WTC11 (cell line): ENCODE measurements at regions of chr17 and their contacts with region 1.

Region 1: DNA sequence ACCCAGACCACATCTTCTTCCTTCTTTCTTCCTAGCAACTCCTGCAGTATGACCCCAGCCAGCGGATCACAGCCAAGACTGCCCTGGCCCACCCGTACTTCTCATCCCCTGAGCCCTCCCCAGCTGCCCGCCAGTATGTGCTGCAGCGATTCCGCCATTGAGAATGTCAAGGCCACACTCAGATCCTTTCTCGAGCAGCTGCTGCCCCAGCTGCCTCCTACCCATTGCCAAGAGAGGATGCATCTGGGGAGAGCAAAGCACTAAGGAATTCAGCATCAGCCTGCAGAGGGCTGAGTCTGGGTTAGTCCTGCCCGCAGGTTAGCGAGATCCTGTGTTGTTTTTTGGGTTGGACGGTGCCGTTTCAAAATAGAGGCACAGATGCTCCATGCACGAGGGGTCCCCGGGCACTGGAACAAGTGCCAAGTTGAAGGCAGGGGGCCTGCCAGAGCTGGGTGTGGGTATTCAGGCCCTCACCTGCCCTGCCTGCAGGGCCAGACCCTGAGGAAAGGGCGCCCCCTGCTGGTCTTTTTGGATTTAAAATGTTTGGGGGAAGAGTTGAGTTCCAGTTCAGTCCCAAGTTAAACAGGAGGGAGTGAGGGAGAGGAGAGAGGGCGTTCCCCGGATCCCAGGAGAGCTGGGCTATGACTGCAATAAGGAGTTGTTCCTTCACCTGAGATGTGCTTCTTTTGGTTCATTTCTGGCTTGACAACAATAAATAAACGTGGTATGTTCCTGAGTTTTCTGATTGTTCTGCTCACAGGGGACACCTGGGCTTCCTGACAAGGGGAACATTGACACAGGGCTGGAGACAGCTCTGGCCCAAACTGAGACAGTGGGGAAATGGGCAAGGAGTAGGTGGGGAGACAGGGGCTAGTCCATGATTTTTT is 4.9 kb downstream of the CDK3 start:
- DNase-seq: peak; percentile 93
- ATAC-seq: peak; percentile 82
- H3K4me3 Mint-ChIP-seq: no peak overlapping the region
- H3K27ac Mint-ChIP-seq: peak overlapping the region; percentile 92
- H3K4me1 Mint-ChIP-seq: no peaks in the 10 kb centered on the region
- H3K27me3 Mint-ChIP-seq: no peaks in the 10 kb centered on the region
- CTCF ChIP-seq: peak; percentile 91

Region 2: DNA sequence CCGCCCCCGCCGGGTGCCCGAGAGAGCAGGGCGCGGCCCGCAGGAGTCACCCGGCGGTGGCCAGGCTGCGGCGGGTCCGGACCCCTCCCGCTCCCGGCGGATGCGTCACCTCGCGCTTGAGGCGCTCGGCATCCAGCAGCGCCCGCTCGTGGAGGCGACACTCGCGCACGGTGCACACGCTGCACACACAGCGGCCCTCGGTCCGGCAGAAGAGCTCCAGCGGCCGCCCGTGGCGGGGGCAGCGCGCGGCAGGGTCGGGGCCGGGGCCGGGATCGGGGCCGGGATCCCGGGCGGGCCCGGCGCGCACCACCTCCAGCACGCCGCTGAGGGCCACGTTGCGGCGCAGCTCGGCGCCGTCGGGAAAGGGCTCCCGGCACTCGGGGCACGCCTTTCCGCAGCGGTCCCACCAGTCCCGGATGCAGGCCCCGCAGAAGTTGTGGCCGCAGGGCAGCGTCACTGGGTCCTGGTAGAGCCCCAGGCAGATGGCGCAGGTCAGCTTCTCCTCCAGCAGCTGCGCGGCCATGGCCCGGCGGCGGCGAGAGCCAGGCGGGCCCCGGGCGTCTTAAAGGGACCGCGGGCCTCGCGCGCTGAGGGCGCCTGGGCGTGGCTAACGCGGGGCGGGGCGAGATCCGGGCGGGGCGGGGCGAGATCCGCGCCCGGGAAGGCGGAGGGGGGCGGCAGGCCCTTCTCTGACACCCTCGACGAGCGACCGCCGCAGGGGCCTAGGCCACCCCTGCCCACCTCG is 108.9 kb before region 1 on chr17 and contains the start of gene TRIM65:
- CTCF ChIA-PET with region 1: interaction called, 11 read pairs
- POLR2A ChIA-PET with region 1: no interaction called
- DNase-seq: peak; percentile 73
- ATAC-seq: peak; percentile 60
- H3K4me3 Mint-ChIP-seq: peak within 1 kb of the TSS; percentile 82
- H3K27ac Mint-ChIP-seq: peak within 1 kb of the TSS; percentile 88
- H3K4me1 Mint-ChIP-seq: peaks cover 26% of the 10 kb centered on the region
- H3K27me3 Mint-ChIP-seq: no peaks in the 10 kb centered on the region
- CTCF ChIP-seq: no peak
- total RNA-seq, gene TRIM65: 51.3 to 56.4 TPM (median 51.4 TPM) in 3 replicates

Region 3: DNA sequence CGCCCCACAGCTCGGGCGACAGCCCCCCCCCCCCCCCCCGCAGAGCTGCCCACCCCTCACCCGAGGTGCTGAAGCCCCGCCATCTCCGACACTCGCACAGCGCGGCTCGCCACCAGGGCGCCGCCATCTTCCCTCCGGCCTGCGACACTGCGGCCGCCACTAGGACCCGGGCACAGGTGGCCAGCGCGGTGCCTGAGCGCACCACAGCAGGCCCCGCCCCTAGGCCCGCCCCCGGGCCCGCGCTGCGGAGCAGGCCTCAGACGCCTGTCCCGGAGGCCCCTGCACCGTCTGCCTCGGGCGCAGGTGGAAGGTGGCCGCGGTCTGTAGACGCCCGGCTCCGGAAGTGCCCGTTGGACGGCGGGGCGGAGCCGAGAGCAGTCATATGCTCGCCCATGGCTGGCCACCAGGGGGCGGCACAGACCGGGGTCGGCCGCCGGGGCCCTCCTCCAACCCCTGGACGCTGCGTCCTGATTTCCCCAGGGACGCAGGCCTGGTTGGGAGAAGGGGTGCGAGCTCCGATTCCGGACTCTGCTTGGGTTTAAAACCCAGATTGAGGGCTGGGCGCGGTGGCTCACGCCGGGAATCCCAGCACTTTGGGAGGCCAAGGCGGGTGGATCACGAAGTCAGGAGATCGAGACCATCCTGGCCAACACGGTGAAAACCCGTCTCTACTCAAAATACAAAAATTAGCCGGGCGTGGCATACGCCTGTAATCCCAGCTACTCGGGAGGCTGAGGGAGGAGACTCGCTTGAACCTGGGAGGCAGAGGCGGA is 100.6 kb before region 1 on chr17 and contains the start of gene MRPL38:
- CTCF ChIA-PET with region 1: interaction called, 70 read pairs
- POLR2A ChIA-PET with region 1: no interaction called
- DNase-seq: peak; percentile 96
- ATAC-seq: peak; percentile 98
- H3K4me3 Mint-ChIP-seq: peak within 1 kb of the TSS; percentile 98
- H3K27ac Mint-ChIP-seq: peak within 1 kb of the TSS; percentile 95
- H3K4me1 Mint-ChIP-seq: peaks cover 3% of the 10 kb centered on the region; the same call in 1 of the 2 replicates
- H3K27me3 Mint-ChIP-seq: no peaks in the 10 kb centered on the region
- CTCF ChIP-seq: peak; percentile 97
- total RNA-seq, gene MRPL38: 107 to 146 TPM (median 116 TPM) in 3 replicates

Region 4: DNA sequence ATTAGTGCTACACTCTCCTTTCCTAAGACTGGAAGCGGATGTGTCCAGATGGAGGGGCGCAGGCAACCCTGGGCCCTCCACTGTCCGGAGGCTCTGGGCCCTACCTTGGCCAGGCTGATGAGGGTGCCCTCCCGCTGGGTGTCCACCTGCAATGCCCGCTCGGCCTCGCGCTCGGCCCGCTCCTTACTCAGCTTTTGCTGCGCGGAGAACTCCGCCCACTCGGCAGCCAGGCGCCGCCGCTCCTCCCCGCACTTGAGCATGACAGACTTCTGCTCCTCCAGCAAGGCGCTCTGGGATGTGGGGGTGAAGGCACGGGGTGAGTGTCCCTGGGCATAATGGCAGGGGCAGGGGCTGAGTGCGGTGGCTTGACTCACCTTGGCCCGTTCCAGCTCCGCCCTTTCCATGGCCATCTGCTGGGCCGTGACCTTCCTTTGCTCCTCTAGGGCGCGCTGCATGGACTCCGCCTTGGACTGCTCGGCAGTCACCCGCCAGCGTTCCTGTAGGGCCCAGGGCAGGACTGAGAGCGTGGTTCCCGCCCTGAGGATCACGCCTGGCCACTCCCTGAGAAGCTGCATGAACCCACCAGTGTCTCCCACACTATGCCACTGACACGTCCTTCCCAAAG is 90.8 kb before region 1 on chr17:
- CTCF ChIA-PET with region 1: interaction called, 20 read pairs
- POLR2A ChIA-PET with region 1: no interaction called
- DNase-seq: peak; percentile 66
- ATAC-seq: peak; percentile 83
- H3K4me3 Mint-ChIP-seq: no peak overlapping the region
- H3K27ac Mint-ChIP-seq: peak overlapping the region; percentile 9; the same call in 1 of the 2 replicates
- H3K4me1 Mint-ChIP-seq: 0 out of 2 replicates have a peak, but pooled peaks cover 2% of the 10 kb centered on the region
- H3K27me3 Mint-ChIP-seq: no peaks in the 10 kb centered on the region
- CTCF ChIP-seq: no peak

Region 5: GRCh38 chr17:75978938-75979704 is 26.4 kb before region 1 on chr17 and contains the starts of genes ACOX1 and TEN1:
- CTCF ChIA-PET with region 1: interaction called, 28 read pairs
- POLR2A ChIA-PET with region 1: no interaction called
- DNase-seq: peak; percentile 96
- ATAC-seq: peak; percentile 91
- H3K4me3 Mint-ChIP-seq: peak within 1 kb of the TSS; percentile 97
- H3K27ac Mint-ChIP-seq: peak within 1 kb of the TSS; percentile 100
- H3K4me1 Mint-ChIP-seq: peaks cover 63% of the 10 kb centered on the region
- H3K27me3 Mint-ChIP-seq: no peaks in the 10 kb centered on the region
- CTCF ChIP-seq: no peak
- total RNA-seq, gene ACOX1: 32.4 to 40.9 TPM (median 32.5 TPM) in 3 replicates
- total RNA-seq, gene TEN1: 15.6 to 18.4 TPM (median 17.2 TPM) in 3 replicates

Region 6: DNA sequence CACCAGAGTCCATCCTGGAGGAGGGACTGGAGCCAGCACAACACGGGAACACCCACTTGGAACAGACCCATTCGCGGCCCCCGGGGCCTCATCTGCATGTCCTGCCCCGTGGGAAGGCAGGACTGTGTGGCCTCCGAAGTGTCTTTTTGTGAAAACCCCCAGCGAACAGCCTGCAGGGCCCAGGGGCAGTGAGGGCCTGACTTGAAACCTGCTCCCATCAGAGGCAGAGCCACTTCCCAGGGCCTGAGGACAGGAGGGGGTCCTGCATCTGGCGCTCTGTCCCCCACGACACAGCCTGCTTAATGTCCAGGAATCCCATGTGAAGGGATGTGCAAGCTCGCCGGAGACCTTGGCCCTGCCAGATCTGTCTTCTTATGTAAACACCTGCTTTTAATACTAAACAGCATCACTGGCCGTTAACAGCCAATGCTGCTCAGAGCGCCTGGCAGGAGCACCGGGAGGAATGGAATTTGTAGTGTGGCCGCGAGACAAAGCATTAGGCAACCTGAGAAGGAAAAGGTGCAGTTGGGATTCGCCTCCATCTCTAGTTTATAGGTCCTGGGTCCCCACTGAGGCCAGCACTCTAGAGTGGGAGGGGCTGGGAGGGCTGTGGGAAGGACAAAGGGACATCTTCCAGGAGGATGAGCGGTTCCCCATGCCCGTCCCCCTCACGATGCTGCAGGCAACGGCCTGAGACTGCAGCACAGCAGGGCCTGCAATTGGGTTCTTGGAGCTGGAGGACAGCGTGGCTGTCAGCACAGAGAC is 31.2 kb after region 1 on chr17:
- CTCF ChIA-PET with region 1: interaction called, 13 read pairs
- POLR2A ChIA-PET with region 1: no interaction called
- DNase-seq: no peak
- ATAC-seq: peak; percentile 43
- H3K4me3 Mint-ChIP-seq: no peak overlapping the region
- H3K27ac Mint-ChIP-seq: peak overlapping the region; percentile 90
- H3K4me1 Mint-ChIP-seq: peaks cover 19% of the 10 kb centered on the region
- H3K27me3 Mint-ChIP-seq: no peaks in the 10 kb centered on the region
- CTCF ChIP-seq: no peak

Region 7: DNA sequence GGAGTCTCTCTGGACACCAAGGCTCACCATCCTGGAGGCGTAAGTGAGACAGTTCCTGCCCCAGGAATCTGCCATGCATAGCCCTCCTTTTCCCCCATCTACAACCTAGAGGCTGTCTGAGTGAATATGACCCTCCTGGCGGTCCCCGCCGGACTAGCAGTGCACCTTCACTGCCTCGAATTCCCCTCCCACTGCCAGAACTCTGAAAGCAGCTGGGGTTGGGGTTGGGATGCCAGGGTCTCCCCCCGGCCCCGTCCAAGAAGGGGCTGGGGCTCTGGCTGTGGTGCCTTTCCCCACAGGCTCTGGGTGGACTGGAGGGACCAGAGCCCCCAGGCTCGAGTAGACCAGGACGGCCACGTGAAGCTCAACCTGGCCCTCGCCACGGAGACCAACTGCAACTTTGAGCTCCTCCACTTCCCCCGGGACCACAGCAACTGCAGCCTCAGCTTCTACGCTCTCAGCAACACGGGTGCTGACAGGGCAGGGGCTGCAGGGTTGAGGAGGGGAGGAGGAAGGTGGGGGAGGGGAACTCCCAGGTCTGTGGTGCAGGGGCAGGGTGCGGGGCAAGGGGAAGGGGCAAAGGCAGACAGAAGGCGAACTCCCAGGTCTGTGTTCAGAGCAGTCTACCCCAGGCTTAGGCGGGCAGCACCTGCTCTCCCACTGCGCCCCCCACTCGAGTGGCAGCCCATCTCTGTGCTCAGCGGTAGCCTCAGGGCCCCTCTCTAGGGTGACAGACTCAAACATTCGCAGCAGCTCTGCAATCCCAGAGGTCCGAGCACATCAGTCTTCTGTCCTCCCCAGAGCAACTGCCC is 74.7 kb after region 1 on chr17:
- CTCF ChIA-PET with region 1: interaction called, 14 read pairs
- POLR2A ChIA-PET with region 1: no interaction called
- DNase-seq: peak; percentile 49
- ATAC-seq: peak; percentile 31
- H3K4me3 Mint-ChIP-seq: peak overlapping the region; percentile 59
- H3K27ac Mint-ChIP-seq: no peak overlapping the region
- H3K4me1 Mint-ChIP-seq: peaks cover 47% of the 10 kb centered on the region
- H3K27me3 Mint-ChIP-seq: peaks cover 46% of the 10 kb centered on the region
- CTCF ChIP-seq: no peak

Region 8: GRCh38 chr17:76314392-76315227 is 309.1 kb after region 1 on chr17:
- CTCF ChIA-PET with region 1: no interaction called
- POLR2A ChIA-PET with region 1: no interaction called
- DNase-seq: no peak
- ATAC-seq: no peak
- H3K4me3 Mint-ChIP-seq: no peak overlapping the region
- H3K27ac Mint-ChIP-seq: peak overlapping the region; percentile 58
- H3K4me1 Mint-ChIP-seq: peaks cover 5% of the 10 kb centered on the region
- H3K27me3 Mint-ChIP-seq: no peaks in the 10 kb centered on the region
- CTCF ChIP-seq: no peak